ENCODE measurements at regions of chr4 and their contacts with region 1.

Region 1: GRCh38 chr4:123776254-123776653 is 379.7 kb downstream of the SPRY1 start:
- DNase-seq: peak; percentile 25
- ATAC-seq: peak; percentile 97
- H3K4me3 ChIP-seq: no peak overlapping the region
- H3K27ac ChIP-seq: no peak overlapping the region
- H3K4me1 ChIP-seq: peaks cover 3% of the 10 kb centered on the region; the same call in 1 of the 2 replicates
- H3K27me3 ChIP-seq: no peaks in the 10 kb centered on the region
- CTCF ChIP-seq: no peak
- EP300 ChIP-seq: peak in 1 of 2 experiments; percentile 74; a peak in 1 of 4 replicates
- POLR2A ChIP-seq: no peak
- RAD21 ChIP-seq: no peak

Region 2: DNA sequence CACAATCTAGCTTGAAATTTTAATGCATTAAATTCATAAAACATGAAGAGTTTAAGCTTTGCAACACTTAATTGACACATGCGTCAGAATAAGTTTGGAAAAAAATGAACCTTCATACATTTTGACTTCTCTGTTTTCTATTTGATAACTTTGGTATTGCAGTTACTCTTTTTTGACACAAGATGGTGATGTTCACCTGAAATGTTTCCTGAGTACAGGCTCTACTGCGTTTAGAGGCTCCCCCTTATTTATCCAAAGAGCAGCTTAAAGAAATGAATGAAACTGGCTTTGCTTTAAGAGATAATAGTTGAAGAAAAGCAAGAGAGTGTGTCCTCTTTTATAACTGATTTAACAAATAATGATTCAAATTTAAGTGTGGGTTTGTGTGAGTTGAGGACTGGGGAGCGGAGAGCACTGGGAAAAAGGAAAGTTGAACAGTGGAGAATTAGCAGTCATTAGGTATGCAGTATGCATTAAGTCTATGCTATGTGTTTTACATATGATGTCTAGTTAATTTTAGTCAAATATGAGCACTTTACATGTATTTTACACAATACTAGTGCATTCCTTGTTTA is 673.3 kb before region 1 on chr4:
- CTCF ChIA-PET with region 1: interaction called, 6 read pairs
- POLR2A ChIA-PET with region 1: no interaction called
- RAD21 ChIA-PET with region 1: no interaction called
- SMC1A ChIA-PET with region 1: interaction called, 6 read pairs
- in situ Hi-C with region 1: no loop called
- intact Hi-C with region 1: loop called (anchors 2 kb)
- DNase-seq: no peak
- ATAC-seq: peak; percentile 82
- H3K4me3 ChIP-seq: no peak overlapping the region
- H3K27ac ChIP-seq: no peak overlapping the region
- H3K4me1 ChIP-seq: no peaks in the 10 kb centered on the region
- H3K27me3 ChIP-seq: no peaks in the 10 kb centered on the region
- CTCF ChIP-seq: peak; percentile 58 to 71 (median 68); a peak in 5 of 6 replicates
- EP300 ChIP-seq: no peak
- POLR2A ChIP-seq: no peak
- RAD21 ChIP-seq: peak; percentile 82

Region 3: GRCh38 chr4:123488916-123489315 is 287.3 kb before region 1 on chr4:
- CTCF ChIA-PET with region 1: no interaction called
- POLR2A ChIA-PET with region 1: no interaction called
- RAD21 ChIA-PET with region 1: no interaction called
- SMC1A ChIA-PET with region 1: no interaction called
- in situ Hi-C with region 1: no loop called
- intact Hi-C with region 1: no loop called
- DNase-seq: peak; percentile 19
- ATAC-seq: peak; percentile 93
- H3K4me3 ChIP-seq: no peak overlapping the region
- H3K27ac ChIP-seq: no peak overlapping the region
- H3K4me1 ChIP-seq: no peaks in the 10 kb centered on the region
- H3K27me3 ChIP-seq: no peaks in the 10 kb centered on the region
- CTCF ChIP-seq: no peak
- EP300 ChIP-seq: no peak
- POLR2A ChIP-seq: no peak
- RAD21 ChIP-seq: no peak

Region 4: DNA sequence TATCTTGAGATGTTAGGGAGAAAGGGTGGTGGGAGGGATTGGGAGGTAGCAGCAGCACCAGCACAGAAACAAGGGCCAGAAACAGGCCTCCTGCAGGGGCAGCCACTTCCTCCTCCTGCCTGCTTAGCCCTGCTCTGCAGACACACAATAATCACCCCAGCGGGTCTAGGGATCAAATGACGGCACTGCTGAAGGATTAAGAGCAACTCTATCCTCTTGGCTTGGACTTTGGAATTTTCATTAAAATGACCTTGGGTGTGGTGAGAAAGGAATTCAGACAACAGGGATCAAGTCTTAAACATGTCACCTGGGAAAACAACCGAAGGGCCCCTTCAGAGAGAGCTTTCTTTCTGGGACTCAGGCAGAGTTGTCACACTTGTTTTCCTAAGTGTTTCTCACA is 26.2 kb before region 1 on chr4:
- CTCF ChIA-PET with region 1: interaction called, 10 read pairs
- POLR2A ChIA-PET with region 1: no interaction called
- RAD21 ChIA-PET with region 1: no interaction called
- SMC1A ChIA-PET with region 1: interaction called, 5 read pairs
- in situ Hi-C with region 1: no loop called
- intact Hi-C with region 1: no loop called
- DNase-seq: no peak
- ATAC-seq: no peak
- H3K4me3 ChIP-seq: no peak overlapping the region
- H3K27ac ChIP-seq: no peak overlapping the region
- H3K4me1 ChIP-seq: no peaks in the 10 kb centered on the region
- H3K27me3 ChIP-seq: no peaks in the 10 kb centered on the region; a peak in 1 of 4 replicates
- CTCF ChIP-seq: no peak
- EP300 ChIP-seq: no peak
- POLR2A ChIP-seq: no peak
- RAD21 ChIP-seq: no peak

Region 5: GRCh38 chr4:124111922-124112321 is 335.7 kb after region 1 on chr4:
- CTCF ChIA-PET with region 1: interaction called, 8 read pairs
- POLR2A ChIA-PET with region 1: no interaction called
- RAD21 ChIA-PET with region 1: interaction called, 3 read pairs
- SMC1A ChIA-PET with region 1: interaction called, 3 read pairs
- in situ Hi-C with region 1: loop called (anchors 10 kb)
- intact Hi-C with region 1: loop called (anchors 1 kb)
- DNase-seq: no peak
- ATAC-seq: peak; percentile 65
- H3K4me3 ChIP-seq: no peak overlapping the region
- H3K27ac ChIP-seq: no peak overlapping the region
- H3K4me1 ChIP-seq: no peaks in the 10 kb centered on the region
- H3K27me3 ChIP-seq: no peaks in the 10 kb centered on the region
- CTCF ChIP-seq: peak; percentile 18 to 60 (median 32); a peak in 4 of 6 replicates
- EP300 ChIP-seq: no peak
- POLR2A ChIP-seq: no peak
- RAD21 ChIP-seq: peak; percentile 74

Region 6: GRCh38 chr4:124322234-124323065 is 546.2 kb after region 1 on chr4:
- CTCF ChIA-PET with region 1: interaction called, 19 read pairs
- POLR2A ChIA-PET with region 1: no interaction called
- RAD21 ChIA-PET with region 1: interaction called, 4 read pairs
- SMC1A ChIA-PET with region 1: interaction called, 12 read pairs
- in situ Hi-C with region 1: no loop called
- intact Hi-C with region 1: loop called (anchors 1 kb)
- DNase-seq: no peak
- ATAC-seq: peak; percentile 20; the same call in 1 of the 3 replicates
- H3K4me3 ChIP-seq: no peak overlapping the region
- H3K27ac ChIP-seq: no peak overlapping the region
- H3K4me1 ChIP-seq: no peaks in the 10 kb centered on the region
- H3K27me3 ChIP-seq: no peaks in the 10 kb centered on the region
- CTCF ChIP-seq: peak in 2 of 3 experiments; percentile 51 to 53; a peak in 4 of 6 replicates
- EP300 ChIP-seq: no peak
- POLR2A ChIP-seq: no peak
- RAD21 ChIP-seq: peak; percentile 44

Measured in GM12878 (cell line).